OCI-LY7 (cell line): ENCODE measurements at regions of chr20 and their contacts with region 1.

Region 1: DNA sequence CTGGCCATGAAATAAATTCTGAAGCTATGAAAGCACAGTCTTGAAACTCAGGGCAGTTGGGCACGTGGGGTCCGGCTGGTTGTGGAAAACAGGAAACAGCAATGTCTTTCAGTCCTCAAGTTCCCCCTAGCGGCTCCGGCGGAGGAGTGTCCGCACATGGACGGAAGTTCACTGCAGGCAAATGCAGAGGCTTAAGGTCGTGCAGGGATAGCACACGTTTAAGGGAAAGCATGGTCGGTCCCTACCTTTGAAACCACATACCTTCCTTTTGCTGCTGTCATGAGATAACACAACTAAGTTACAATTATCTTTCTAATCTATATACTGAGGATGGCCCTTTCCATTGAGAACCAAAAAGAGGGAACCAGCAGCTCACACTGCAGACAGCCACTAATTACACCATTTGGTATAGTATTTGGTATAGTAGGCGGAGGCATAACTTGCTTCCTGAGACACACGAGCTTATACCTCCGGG is 52.6 kb upstream of the NFATC2 start:
- DNase-seq: peak; percentile 96
- H3K4me3 ChIP-seq: peak overlapping the region; percentile 21
- H3K27ac ChIP-seq: peak overlapping the region; percentile 67
- H3K4me1 ChIP-seq: peaks cover 46% of the 10 kb centered on the region
- CTCF ChIP-seq: peak; percentile 94

Region 2: DNA sequence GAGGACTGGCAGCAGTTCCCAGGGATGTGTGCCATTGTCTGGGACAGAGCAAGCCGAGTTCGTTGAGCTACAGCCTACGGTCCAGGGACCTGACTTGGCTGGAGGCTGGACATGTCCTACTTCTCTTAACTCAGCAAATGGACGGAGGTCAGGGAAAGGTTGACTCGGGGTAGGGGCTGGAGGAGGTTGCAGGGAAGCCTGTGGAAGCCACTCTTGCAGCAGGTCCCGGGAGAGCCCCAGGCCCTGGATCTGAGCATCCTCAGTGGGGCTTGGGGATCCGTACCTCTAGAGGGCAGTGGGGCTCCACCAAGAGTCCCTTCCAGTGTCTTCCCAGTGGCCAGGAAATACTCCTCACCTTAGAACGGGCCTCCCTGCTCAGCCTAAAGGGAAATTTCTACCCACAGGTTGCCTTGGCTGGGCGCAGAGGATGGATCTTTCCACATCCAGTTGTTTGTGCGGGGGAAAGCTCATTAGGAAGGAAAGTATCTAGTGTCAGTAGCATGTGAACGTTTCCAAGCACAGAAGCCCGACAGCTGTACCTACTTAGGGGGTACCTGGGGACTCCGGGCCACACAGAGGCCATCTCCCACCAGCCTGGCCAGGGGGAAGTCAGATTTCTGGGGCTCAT is 222.8 kb before region 1 on chr20:
- CTCF ChIA-PET with region 1: interaction called, 6 read pairs
- POLR2A ChIA-PET with region 1: interaction called, 3 read pairs
- intact Hi-C with region 1: loop called (anchors 1 kb)
- DNase-seq: peak; percentile 81
- H3K4me3 ChIP-seq: no peak overlapping the region
- H3K27ac ChIP-seq: no peak overlapping the region
- H3K4me1 ChIP-seq: peaks cover 22% of the 10 kb centered on the region
- CTCF ChIP-seq: peak; percentile 91

Region 3: DNA sequence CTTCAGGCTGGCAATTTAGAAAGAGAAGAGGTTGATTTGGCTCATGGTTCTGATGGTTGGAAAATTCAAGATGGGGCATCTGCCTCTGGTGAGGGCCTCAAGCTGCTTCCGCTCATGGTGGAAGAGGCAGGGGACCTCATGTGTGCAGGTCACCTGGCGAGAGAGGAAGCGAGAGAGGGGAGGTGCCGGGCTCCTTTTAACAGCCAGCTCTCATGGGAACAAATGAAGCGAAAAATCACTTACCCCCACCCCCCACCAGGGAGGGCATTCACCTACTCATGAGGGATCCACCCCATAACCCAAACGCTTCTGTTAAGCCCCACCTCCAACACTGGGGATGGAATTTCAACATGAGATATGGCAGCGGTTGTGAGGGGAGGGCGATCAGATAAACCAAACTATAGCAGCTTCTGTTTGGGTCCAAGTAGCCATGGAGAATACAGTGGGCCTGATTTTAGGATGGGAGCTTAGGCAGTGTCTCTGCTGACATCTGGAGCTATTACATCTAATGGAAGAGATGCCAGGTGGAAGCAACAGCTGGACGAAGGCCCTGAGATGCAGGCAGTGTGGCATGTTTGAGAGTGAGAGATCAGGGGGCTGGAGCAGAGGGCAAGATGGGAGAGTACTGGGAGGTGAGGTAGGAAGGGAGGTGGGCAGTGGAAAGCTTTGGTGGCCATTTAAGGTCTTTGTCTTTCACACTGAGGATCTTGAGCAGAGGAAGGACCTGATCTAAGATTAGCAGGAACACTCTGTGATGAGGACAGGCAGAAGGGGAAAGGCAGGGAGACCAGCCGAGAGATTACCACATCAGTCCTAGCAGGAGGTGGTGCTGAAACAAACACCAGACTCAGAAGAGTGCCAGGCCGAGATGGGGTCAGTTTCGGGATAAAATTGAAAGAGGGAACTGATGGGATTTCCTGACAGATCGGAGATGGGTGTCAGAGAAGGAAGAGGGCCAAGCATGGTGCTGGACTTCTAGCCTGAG is 214.4 kb before region 1 on chr20:
- CTCF ChIA-PET with region 1: interaction called, 10 read pairs
- POLR2A ChIA-PET with region 1: interaction called, 9 read pairs
- intact Hi-C with region 1: loop called (anchors 1 kb)
- DNase-seq: peak; percentile 99
- H3K4me3 ChIP-seq: peak overlapping the region; percentile 56
- H3K27ac ChIP-seq: peak overlapping the region; percentile 95
- H3K4me1 ChIP-seq: peaks cover 94% of the 10 kb centered on the region
- CTCF ChIP-seq: no peak

Region 4: GRCh38 chr20:51541189-51542032 is 53.7 kb before region 1 on chr20:
- CTCF ChIA-PET with region 1: no interaction called
- POLR2A ChIA-PET with region 1: interaction called, 8 read pairs
- intact Hi-C with region 1: loop called (anchors 1 kb)
- DNase-seq: peak; percentile 72
- H3K4me3 ChIP-seq: peak overlapping the region; percentile 79
- H3K27ac ChIP-seq: peak overlapping the region; percentile 77
- H3K4me1 ChIP-seq: peaks cover 58% of the 10 kb centered on the region
- CTCF ChIP-seq: no peak

Region 5: DNA sequence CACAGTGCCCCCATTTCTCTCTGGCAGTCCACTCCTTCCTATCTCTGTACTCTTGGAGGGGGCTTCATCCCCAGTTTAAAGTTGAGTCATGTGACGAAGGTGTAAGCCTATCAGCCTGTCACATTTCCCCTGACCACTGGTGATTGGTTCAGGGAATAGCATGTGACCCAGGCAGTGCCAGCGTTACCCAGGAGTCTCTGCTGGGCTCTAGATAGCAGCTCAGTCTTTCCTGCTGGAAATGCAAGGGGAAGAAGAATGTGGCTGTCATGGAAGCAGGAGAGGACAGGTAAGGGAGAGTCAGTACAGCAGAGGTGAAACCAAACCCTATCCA is 17.0 kb before region 1 on chr20:
- CTCF ChIA-PET with region 1: no interaction called
- POLR2A ChIA-PET with region 1: no interaction called
- intact Hi-C with region 1: no loop called
- DNase-seq: no peak
- H3K4me3 ChIP-seq: no peak overlapping the region
- H3K27ac ChIP-seq: no peak overlapping the region
- H3K4me1 ChIP-seq: no peaks in the 10 kb centered on the region
- CTCF ChIP-seq: no peak

Region 6: GRCh38 chr20:51624157-51624731 is 29.1 kb after region 1 on chr20:
- CTCF ChIA-PET with region 1: no interaction called
- POLR2A ChIA-PET with region 1: interaction called, 12 read pairs
- intact Hi-C with region 1: no loop called
- DNase-seq: peak; percentile 89
- H3K4me3 ChIP-seq: no peak overlapping the region
- H3K27ac ChIP-seq: no peak overlapping the region
- H3K4me1 ChIP-seq: peaks cover 21% of the 10 kb centered on the region
- CTCF ChIP-seq: peak; percentile 90

Region 7: DNA sequence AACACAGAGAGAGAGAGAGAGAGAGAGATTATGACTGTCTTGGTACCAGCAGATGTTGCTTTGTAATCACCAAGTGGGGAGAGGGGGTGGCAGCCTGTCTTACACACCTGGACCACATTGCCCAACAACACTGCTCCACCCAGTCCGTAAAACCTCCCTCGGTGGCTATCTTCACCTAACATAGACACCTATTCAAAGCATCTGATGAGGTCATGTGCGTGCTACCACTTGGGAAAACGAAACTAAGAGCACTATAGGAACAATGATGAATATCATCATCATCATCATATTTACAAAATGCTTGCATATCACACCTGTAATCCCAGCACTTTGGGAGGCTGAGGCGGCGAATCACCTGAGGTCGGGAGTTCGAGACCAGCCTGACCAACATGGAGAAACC is 231.3 kb after region 1 on chr20:
- CTCF ChIA-PET with region 1: no interaction called
- POLR2A ChIA-PET with region 1: no interaction called
- intact Hi-C with region 1: no loop called
- DNase-seq: no peak
- H3K4me3 ChIP-seq: no peak overlapping the region
- H3K27ac ChIP-seq: no peak overlapping the region
- H3K4me1 ChIP-seq: no peaks in the 10 kb centered on the region
- CTCF ChIP-seq: no peak